BJ (cell line): ENCODE measurements at regions of chr1 and their contacts with region 1.

Region 1: DNA sequence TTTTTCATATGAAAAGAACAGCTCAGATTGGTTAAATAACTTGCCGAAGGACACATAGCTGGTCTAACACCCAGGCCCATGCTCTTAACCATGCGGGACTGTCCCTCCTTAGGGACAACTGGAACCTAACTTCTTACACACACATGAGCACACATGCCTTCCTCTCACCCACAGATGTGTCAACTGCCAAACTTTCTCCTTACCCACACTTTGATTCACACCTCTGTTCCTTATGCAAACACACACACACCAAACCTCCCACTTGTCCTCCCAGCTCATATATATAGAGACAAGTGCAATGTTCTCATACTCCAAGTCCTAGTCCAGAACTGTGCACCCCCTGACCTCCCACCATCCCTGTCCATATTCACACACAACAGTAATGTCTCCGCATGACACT is 4.3 kb downstream of the RAB25 start:
- DNase-seq: no peak
- H3K4me3 ChIP-seq: no peak overlapping the region
- H3K27me3 ChIP-seq: no peaks in the 10 kb centered on the region
- CTCF ChIP-seq: no peak

Region 2: DNA sequence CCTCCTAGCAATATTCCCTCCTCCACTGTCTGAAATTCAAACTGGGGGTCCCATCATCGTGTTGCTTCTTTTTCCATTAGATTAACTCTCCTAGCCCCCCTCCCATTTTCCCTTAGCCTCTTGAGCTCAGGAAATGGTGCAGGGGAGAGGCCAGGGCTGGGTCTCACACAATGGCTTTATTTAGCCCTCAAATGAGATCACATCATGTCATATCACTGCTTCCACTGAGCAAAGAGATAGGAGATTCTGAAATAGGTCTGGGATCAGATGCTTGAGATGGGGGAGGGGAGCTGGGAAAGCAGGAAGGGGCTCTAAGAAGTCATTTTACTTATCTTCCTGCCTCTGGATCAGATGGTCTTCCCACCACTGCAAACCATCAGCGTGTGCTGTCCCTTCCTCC is 69.0 kb before region 1 on chr1:
- CTCF ChIA-PET with region 1: interaction called, 13 read pairs
- POLR2A ChIA-PET with region 1: no interaction called
- DNase-seq: no peak
- H3K4me3 ChIP-seq: no peak overlapping the region
- H3K27me3 ChIP-seq: no peaks in the 10 kb centered on the region; the same call in 1 of the 2 replicates
- CTCF ChIP-seq: no peak

Region 3: DNA sequence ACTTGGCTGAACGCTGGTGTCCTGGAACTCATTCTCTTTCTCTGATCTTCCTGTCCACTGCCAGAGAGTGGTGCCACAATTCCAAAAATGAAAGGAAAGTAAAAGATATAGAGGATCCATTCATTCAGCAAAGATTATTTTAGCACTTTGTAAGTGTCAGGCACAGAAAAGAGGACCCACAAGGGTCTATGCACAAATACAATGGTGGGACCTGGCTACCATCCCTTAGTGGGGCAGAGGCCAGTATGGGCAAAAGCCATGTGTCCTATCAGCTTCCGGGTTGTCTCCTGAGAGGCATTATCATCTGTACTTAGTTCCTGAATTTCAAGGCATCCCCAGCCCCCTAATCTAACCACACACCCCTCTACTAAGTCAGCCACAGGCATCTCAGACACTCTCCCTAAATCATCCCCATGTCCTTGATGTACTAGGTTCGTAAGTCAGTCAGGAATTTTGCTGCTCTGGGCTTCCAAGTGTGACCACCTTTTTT is 63.5 kb before region 1 on chr1:
- CTCF ChIA-PET with region 1: interaction called, 13 read pairs
- POLR2A ChIA-PET with region 1: no interaction called
- DNase-seq: no peak
- H3K4me3 ChIP-seq: no peak overlapping the region
- H3K27me3 ChIP-seq: no peaks in the 10 kb centered on the region
- CTCF ChIP-seq: no peak

Region 4: GRCh38 chr1:156025877-156026276 is 39.3 kb before region 1 on chr1:
- CTCF ChIA-PET with region 1: interaction called, 14 read pairs
- POLR2A ChIA-PET with region 1: interaction called, 19 read pairs
- DNase-seq: no peak
- H3K4me3 ChIP-seq: no peak overlapping the region
- H3K27me3 ChIP-seq: no peaks in the 10 kb centered on the region; the same call in 1 of the 2 replicates
- CTCF ChIP-seq: peak; percentile 73

Region 5: DNA sequence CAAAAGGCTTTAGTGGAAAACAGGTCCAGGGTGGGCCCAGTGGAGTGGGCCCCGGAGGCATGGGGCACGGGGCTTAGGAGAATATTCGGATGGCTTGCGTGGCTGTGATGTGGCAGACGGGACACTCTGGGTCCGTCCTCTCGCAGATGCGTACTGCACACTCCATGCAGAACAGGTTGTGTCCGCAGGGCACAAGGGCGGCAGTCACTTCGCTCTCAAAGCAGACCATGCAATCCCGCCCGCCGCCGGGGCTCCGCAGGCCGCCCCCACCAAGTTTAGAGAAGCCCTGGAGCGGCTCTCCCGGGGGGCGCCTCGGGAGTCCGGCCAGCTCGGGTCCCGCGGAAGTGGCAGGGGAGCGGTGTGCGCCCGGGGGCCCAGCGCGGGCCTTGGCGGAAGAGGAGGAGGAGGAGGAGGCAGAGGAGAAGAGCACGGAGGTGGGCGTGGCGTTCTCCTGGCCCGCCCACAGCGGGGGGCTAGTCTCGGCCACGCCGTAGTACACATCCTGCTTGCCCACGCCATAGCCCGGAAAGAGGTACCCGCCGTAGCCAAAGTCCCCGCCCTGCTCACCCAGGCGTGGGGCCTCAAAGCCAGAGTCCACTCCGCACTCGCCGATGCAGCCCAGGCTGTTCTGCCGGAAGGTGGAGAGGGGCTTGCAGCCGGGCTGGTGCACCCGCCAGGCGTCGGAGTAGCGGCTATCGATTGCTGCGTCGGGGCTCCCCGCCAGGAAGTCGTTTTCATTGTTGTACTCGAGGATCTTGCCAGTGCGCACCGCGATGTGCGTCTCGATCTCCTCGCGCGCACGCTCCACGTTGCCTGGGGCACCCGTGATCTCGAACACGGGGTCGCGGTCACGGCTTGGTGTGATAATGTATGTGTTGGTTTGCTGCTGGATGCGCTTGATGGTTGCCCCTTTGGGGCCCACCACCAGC is 11.6 kb after region 1 on chr1:
- CTCF ChIA-PET with region 1: interaction called, 20 read pairs
- POLR2A ChIA-PET with region 1: no interaction called
- DNase-seq: no peak
- H3K4me3 ChIP-seq: peak overlapping the region; percentile 30
- H3K27me3 ChIP-seq: no peaks in the 10 kb centered on the region
- CTCF ChIP-seq: no peak